CD4-positive, alpha-beta memory T cell (primary cell): ENCODE measurements at regions of chr22 and their contacts with region 1.

Region 1: GRCh38 chr22:37166675-37167066 is 17.0 kb upstream of the IL2RB start:
- DNase-seq: peak; percentile 73 to 82 (median 78)
- H3K4me3 ChIP-seq: peak overlapping the region; percentile 15 to 18
- H3K4me3 Mint-ChIP-seq: peak overlapping the region; percentile 75 to 90 (median 86)
- H3K27ac ChIP-seq: peak overlapping the region; percentile 37
- H3K27ac Mint-ChIP-seq: peak overlapping the region; percentile 85 to 98 (median 93)
- H3K4me1 ChIP-seq: peaks cover 90% of the 10 kb centered on the region
- H3K4me1 Mint-ChIP-seq: peaks cover 63 to 95% (median 78%) of the 10 kb centered on the region in 4 donors
- H3K27me3 ChIP-seq: no peaks in the 10 kb centered on the region
- H3K27me3 Mint-ChIP-seq: no peaks in the 10 kb centered on the region

Region 2: DNA sequence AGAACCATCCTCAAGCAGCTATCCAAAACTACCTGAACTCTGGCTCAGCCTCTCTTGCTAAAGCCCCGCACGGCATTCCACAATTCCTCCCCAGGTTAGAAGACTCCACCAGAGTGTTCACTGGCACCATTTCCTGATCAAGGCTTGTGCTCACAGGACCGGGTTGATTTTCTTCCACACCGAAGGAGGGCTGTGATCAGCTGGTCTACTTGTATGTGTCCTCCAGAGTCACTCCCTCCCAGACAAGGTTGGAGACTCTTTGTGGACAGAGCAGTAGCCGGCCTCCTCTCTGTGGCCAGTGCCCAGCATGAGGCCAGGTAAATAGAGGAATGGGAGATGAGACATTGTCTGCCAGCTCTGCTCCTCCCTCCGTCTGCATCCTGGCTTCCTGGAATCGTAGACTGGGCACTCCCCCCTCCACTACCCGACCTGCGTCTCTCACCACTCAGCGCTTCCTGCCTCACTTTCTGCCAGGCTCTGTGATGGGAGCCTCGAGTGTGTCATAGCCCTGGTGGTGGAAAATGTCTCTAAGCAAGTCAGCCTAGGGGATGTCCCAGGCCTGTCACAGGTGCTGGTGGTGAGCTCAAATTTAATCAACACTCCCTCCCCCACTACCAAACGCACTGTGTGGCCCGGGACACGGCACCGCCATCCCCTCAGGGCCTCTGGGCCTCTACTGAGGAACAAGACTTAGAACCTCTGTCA is 44.6 kb before region 1 on chr22:
- CTCF ChIA-PET with region 1: interaction called, 26 read pairs
- POLR2A ChIA-PET with region 1: interaction called, 79 read pairs
- intact Hi-C with region 1: loop called (anchors 1 kb)
- DNase-seq: peak; percentile 92 to 99 (median 95)
- H3K4me3 ChIP-seq: peak overlapping the region in 1 of 2 donors; percentile 36
- H3K4me3 Mint-ChIP-seq: peak overlapping the region; percentile 76 to 90 (median 84)
- H3K27ac ChIP-seq: peak overlapping the region; percentile 98
- H3K27ac Mint-ChIP-seq: peak overlapping the region; percentile 98 to 100 (median 99)
- H3K4me1 ChIP-seq: peaks cover 58% of the 10 kb centered on the region
- H3K4me1 Mint-ChIP-seq: peaks cover 39 to 75% (median 54%) of the 10 kb centered on the region in 4 donors
- H3K27me3 ChIP-seq: no peaks in the 10 kb centered on the region
- H3K27me3 Mint-ChIP-seq: no peaks in the 10 kb centered on the region

Region 3: GRCh38 chr22:37186228-37186996 is 19.7 kb after region 1 on chr22:
- CTCF ChIA-PET with region 1: interaction called, 3 read pairs
- POLR2A ChIA-PET with region 1: interaction called, 8 read pairs
- intact Hi-C with region 1: loop called (anchors 2 kb)
- DNase-seq: peak; percentile 68 to 79 (median 76)
- H3K4me3 ChIP-seq: peak overlapping the region in 1 of 2 donors; percentile 1
- H3K4me3 Mint-ChIP-seq: peak overlapping the region; percentile 74 to 87 (median 80)
- H3K27ac ChIP-seq: peak overlapping the region; percentile 31
- H3K27ac Mint-ChIP-seq: peak overlapping the region; percentile 73 to 95 (median 85)
- H3K4me1 ChIP-seq: peaks cover 61% of the 10 kb centered on the region
- H3K4me1 Mint-ChIP-seq: peaks cover 24 to 56% (median 40%) of the 10 kb centered on the region in 4 donors
- H3K27me3 ChIP-seq: no peaks in the 10 kb centered on the region
- H3K27me3 Mint-ChIP-seq: no peaks in the 10 kb centered on the region

Region 4: DNA sequence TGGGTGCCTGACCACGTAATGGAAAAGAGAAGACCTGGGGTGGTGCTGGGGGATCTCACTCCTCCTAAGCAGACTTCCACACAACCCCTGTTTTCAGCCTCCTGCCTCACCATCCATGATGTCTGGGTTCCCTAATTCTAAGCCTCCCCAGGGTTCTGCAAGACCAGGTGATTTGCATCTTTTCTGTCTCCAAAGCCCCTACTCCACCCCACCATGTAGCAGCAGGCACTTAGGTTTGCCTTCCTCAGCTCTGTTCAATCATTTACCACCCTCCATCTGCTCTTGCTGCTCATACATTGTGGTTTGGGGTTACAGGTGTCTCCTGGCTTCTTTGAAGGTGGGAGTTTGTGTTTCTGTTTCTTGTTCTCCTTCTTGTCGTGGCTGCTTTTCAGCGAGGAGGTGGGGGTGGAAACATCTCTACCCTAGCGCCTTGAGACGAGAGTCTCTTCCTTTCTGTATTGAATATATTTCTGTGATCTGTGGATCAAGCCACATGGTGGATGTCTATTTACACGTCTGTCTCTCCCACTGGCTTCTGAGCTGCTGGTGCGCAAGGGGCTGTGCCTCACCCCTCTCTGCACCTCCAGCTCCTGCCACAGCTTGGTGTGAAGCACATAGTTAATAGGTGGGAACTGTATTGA is 52.2 kb after region 1 on chr22:
- CTCF ChIA-PET with region 1: interaction called, 4 read pairs
- POLR2A ChIA-PET with region 1: interaction called, 12 read pairs
- intact Hi-C with region 1: no loop called
- DNase-seq: peak; percentile 86 to 96 (median 91)
- H3K4me3 ChIP-seq: peak overlapping the region; percentile 15 to 51
- H3K4me3 Mint-ChIP-seq: peak overlapping the region; percentile 67 to 90 (median 84)
- H3K27ac ChIP-seq: peak overlapping the region; percentile 58
- H3K27ac Mint-ChIP-seq: peak overlapping the region; percentile 87 to 98 (median 95)
- H3K4me1 ChIP-seq: peaks cover 73% of the 10 kb centered on the region
- H3K4me1 Mint-ChIP-seq: peaks cover 58 to 79% (median 64%) of the 10 kb centered on the region in 4 donors
- H3K27me3 ChIP-seq: no peaks in the 10 kb centered on the region
- H3K27me3 Mint-ChIP-seq: no peaks in the 10 kb centered on the region

Region 5: GRCh38 chr22:37237371-37238268 is 70.9 kb after region 1 on chr22:
- CTCF ChIA-PET with region 1: interaction called, 9 read pairs
- POLR2A ChIA-PET with region 1: interaction called, 15 read pairs
- intact Hi-C with region 1: loop called (anchors 5 kb)
- DNase-seq: no peak
- H3K4me3 ChIP-seq: peak overlapping the region; percentile 4 to 8
- H3K4me3 Mint-ChIP-seq: peak overlapping the region; percentile 80 to 96 (median 88)
- H3K27ac ChIP-seq: peak overlapping the region; percentile 91
- H3K27ac Mint-ChIP-seq: peak overlapping the region; percentile 87 to 98 (median 97)
- H3K4me1 ChIP-seq: peaks cover 96% of the 10 kb centered on the region
- H3K4me1 Mint-ChIP-seq: peaks cover 68 to 100% (median 88%) of the 10 kb centered on the region in 4 donors
- H3K27me3 ChIP-seq: no peaks in the 10 kb centered on the region
- H3K27me3 Mint-ChIP-seq: no peaks in the 10 kb centered on the region